AG04449 (cell line): ENCODE measurements at regions of chr3 and their contacts with region 1.

Region 1: DNA sequence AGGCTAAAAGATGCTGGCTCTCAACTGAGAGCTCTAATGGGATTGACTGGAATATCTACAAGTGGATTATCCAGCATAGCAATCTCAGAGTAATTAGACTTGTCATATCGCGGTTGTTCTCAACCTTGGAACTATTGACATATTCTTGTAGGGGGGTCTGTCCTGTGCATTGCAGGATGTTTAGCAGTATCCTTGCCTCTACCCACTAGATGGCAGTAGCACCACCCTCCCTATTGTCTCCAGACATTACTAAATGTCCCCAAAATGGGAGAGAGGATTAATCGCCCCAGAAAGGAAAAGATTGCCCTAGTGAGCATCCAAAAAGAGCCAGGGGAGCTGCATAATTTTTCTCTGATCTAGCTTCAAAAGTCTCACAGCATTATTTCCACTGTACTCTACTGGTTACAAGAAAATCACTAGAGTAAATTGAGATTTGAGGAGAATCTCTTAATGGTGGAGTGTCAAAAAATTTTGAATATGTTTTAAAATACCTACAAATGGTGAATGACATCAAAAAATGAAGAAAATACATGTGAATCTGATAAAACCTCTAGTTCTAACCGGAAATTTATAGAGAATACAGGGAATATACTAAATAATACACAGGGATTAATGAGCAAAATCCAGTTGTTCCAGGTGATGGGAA is 388.2 kb upstream of the AGTR1 start:
- DNase-seq: no peak
- H3K4me3 ChIP-seq: no peak overlapping the region
- CTCF ChIP-seq: peak; percentile 82

Region 2: GRCh38 chr3:147945968-147946519 is 363.5 kb before region 1 on chr3:
- CTCF ChIA-PET with region 1: no interaction called
- POLR2A ChIA-PET with region 1: no interaction called
- DNase-seq: peak; percentile 87
- H3K4me3 ChIP-seq: peak overlapping the region; percentile 31
- CTCF ChIP-seq: peak; percentile 59

Region 3: DNA sequence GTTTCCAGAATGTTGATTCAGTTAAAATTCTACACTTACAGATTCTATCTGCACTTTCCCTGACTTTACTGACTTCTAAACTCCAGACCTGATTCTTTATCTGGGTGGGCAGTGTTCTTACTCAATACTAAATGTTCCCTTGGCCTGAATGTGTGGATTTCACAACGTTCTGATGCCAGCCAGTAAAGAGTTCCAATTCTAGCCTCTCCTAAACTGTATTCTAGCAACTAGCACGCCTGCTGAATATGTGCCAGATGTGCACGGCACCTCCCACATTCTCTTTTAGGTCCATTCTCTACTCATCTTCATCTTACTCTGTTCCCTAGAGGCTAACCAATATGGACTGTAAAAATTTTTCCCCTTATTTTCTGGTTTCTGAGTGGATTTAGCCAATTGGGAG is 91.3 kb before region 1 on chr3:
- CTCF ChIA-PET with region 1: no interaction called
- POLR2A ChIA-PET with region 1: no interaction called
- DNase-seq: no peak
- H3K4me3 ChIP-seq: no peak overlapping the region
- CTCF ChIP-seq: no peak

Region 4: GRCh38 chr3:148289159-148289558 is 20.4 kb before region 1 on chr3:
- CTCF ChIA-PET with region 1: interaction called, 30 read pairs
- POLR2A ChIA-PET with region 1: no interaction called
- DNase-seq: no peak
- H3K4me3 ChIP-seq: no peak overlapping the region
- CTCF ChIP-seq: no peak

Region 5: DNA sequence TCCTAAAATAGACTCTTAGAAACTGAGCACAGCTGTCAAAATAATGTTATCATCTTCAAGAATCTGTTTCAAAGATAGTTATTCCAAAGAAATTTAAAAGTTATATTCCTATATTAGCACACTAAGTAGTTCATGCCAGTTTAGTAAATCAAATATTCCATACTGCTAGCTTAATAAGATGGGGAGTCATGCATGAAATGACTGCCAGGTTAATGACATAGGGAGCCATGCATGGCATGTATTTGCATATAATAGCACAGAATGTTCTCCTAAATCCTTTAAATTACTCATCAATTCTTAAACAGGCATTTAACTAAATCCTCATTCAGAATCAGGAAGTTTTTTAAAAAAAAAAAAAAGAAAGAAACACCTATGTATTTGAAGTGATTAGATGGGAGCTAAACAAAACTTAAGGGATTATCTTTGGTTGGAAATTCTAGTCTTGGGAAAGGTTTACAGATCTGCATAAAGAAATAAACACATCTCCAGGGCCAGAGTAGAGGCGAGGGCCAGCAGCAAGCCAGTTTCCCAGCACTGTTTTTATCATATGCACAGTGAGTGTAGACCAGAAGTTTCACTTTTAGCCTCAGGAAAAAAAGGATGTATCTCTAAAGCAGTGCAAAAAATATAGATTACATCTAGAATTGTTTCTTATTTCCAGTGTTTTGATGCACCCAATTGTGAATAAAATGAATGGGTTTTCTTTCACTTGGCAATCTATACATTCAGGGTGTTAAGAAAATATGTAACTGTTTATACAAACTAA is 21.8 kb after region 1 on chr3:
- CTCF ChIA-PET with region 1: interaction called, 11 read pairs
- POLR2A ChIA-PET with region 1: no interaction called
- DNase-seq: no peak
- H3K4me3 ChIP-seq: no peak overlapping the region
- CTCF ChIP-seq: no peak

Region 6: GRCh38 chr3:148360051-148360450 is 50.5 kb after region 1 on chr3:
- CTCF ChIA-PET with region 1: interaction called, 13 read pairs
- POLR2A ChIA-PET with region 1: no interaction called
- DNase-seq: peak; percentile 79
- H3K4me3 ChIP-seq: no peak overlapping the region
- CTCF ChIP-seq: no peak

Region 7: GRCh38 chr3:148366743-148367410 is 57.4 kb after region 1 on chr3:
- CTCF ChIA-PET with region 1: interaction called, 32 read pairs
- POLR2A ChIA-PET with region 1: no interaction called
- DNase-seq: no peak
- H3K4me3 ChIP-seq: no peak overlapping the region
- CTCF ChIP-seq: no peak